Mammary epithelial cell (primary cell): ENCODE measurements at regions of chr9 and their contacts with region 1.

Region 1: DNA sequence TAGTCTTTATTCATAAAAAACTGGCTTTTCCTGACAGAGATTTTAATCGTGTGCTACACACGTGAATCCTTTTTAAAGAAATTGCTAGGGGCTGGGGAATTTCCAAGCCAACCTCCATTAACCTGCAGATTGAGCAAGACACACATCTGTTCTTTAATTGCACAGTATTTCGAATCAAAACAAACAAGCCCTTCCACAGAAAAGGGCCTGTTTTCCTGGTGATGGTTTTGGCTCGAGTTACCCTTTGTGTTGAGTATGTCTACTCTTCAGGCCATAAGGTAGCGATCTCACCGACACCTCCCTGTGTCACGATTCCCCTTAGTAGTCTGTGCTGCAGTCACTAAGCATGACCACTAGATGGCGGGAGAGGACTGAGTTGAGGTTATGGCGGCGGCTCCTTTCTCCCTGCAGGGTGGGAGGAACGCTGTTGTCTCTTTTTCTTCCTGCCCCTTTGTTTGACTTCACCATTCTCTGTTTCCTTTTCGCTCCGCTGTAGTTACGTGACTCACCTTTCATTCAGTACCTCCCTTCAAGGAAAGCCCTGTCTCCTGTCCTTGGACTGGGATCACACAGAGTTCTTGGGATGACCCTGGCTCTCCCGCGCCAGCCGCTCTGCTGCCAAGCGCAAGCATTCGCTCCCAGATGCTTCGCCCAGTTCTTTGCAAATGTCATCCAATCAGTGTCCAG is 137.1 kb upstream of the SLC24A2 start:
- DNase-seq: peak; percentile 86
- H3K4me3 ChIP-seq: peak overlapping the region; percentile 21 to 39 (median 36)
- H3K27ac ChIP-seq: no peak overlapping the region
- H3K4me1 ChIP-seq: no peaks in the 10 kb centered on the region
- H3K27me3 ChIP-seq: no peaks in the 10 kb centered on the region
- CTCF ChIP-seq: peak; percentile 96 to 98

Region 2: GRCh38 chr9:19471737-19472648 is 454.0 kb before region 1 on chr9:
- CTCF ChIA-PET with region 1: no interaction called
- dilution Hi-C with region 1: no loop called
- in situ Hi-C with region 1: no loop called
- intact Hi-C with region 1: loop called (anchors 1 kb)
- DNase-seq: peak; percentile 48
- H3K4me3 ChIP-seq: no peak overlapping the region
- H3K27ac ChIP-seq: no peak overlapping the region
- H3K4me1 ChIP-seq: no peaks in the 10 kb centered on the region
- H3K27me3 ChIP-seq: no peaks in the 10 kb centered on the region
- CTCF ChIP-seq: peak; percentile 56 to 78

Region 3: DNA sequence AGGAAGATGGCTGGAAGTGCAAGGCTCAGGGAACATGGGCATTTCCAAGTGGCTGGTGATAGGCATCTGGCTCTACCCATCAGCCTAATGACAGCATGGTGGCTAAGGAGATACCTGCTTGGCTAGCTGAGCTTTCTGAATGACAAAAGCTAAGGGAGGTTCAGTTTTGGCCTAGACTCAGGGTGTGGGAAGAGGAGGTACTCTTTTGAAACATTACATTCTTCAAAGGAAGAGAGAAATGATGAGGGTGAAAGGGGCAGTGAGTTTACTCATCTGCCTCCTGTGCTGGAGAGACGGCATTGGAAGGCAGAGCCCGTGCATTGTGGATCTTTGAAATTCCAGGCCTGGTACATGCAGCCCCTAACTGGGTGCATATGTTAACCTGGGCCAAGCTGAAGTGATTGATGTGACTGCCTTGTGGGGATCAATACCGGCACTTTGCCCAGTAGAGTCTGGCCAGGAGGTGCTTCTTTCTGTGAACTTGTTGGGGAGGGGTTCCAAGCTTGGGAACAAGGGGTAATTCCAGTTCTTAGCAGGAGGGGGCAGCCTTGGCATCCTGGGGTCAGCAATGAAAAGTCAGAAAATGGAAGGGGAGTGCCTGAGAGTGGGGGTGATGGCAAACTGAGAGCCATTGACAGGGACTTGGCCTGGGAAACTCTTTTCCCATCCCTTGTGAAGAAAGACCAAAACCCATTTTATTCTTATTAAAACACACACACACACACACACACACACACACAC is 408.6 kb before region 1 on chr9:
- CTCF ChIA-PET with region 1: interaction called, 5 read pairs
- dilution Hi-C with region 1: no loop called
- in situ Hi-C with region 1: no loop called
- intact Hi-C with region 1: loop called (anchors 1 kb)
- DNase-seq: peak; percentile 12
- H3K4me3 ChIP-seq: no peak overlapping the region
- H3K27ac ChIP-seq: no peak overlapping the region
- H3K4me1 ChIP-seq: no peaks in the 10 kb centered on the region
- H3K27me3 ChIP-seq: peaks cover 5% of the 10 kb centered on the region
- CTCF ChIP-seq: peak; percentile 46 to 67

Region 4: DNA sequence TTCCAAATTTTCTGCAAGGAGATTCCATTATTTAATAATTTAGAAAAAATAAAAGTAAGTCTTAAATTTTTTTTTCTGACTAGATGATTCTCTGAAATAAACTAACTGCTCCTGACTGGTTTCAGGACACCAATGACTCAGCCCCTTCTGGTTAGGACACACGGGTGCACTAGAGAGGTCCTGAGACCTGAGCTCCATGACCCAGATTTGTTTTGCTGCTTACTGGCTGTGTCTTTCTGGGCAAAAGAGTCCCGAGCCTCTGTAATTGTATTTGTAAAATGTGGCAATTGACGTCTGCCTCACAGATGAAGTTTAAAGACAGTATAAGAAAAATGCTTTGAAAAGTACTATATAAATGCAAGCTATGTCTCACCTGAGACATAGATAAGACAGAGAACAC is 226.2 kb before region 1 on chr9:
- CTCF ChIA-PET with region 1: no interaction called
- dilution Hi-C with region 1: no loop called
- in situ Hi-C with region 1: no loop called
- intact Hi-C with region 1: no loop called
- DNase-seq: no peak
- H3K4me3 ChIP-seq: no peak overlapping the region
- H3K27ac ChIP-seq: no peak overlapping the region
- H3K4me1 ChIP-seq: no peaks in the 10 kb centered on the region
- H3K27me3 ChIP-seq: peaks cover 3% of the 10 kb centered on the region
- CTCF ChIP-seq: no peak

Region 5: DNA sequence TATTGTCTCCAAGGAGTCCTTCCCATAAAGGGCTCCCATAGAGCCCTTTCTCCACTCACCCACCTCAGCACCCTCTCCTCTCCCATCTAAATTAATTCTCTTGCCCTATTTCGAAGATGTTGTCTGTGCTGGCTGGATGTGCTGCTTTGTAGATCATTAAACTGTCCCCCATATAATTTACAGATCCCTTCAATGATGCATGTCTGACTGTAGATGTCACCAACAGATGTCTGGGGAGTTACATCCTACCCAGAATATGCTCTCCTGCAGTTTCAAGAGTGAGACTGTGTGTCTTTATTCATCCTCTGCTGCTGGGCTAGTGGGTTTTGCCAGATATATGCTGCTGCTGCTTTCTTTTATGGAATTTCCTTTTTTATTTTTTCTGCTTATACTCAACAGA is 345.1 kb after region 1 on chr9:
- CTCF ChIA-PET with region 1: no interaction called
- dilution Hi-C with region 1: no loop called
- in situ Hi-C with region 1: no loop called
- intact Hi-C with region 1: loop called (anchors 2 kb)
- DNase-seq: no peak
- H3K4me3 ChIP-seq: no peak overlapping the region
- H3K27ac ChIP-seq: no peak overlapping the region
- H3K4me1 ChIP-seq: peaks cover 11% of the 10 kb centered on the region
- H3K27me3 ChIP-seq: no peaks in the 10 kb centered on the region
- CTCF ChIP-seq: no peak

Region 6: DNA sequence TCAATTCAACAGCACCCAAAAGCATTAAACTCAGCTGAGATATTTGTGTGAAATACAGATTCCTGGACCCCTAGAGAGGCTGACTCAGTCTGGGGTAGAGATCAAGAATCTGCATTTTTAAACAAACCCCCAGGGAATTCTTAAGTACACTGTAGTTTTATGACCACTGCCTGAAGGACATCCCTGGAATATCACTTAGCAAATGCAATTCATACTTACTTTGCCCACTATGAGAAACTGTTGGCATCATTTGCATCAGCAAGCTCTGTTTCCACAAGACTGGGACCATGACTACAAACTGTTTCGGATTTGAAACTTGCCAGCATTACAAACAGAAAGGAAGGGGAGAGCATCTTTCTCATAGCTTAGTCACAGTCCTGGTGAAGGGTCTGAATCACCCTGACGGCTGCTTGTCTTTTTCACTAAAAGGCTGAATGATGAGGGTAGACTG is 632.6 kb after region 1 on chr9:
- CTCF ChIA-PET with region 1: no interaction called
- dilution Hi-C with region 1: no loop called
- in situ Hi-C with region 1: no loop called
- intact Hi-C with region 1: loop called (anchors 10 kb)
- DNase-seq: peak; percentile 94
- H3K4me3 ChIP-seq: no peak overlapping the region
- H3K27ac ChIP-seq: no peak overlapping the region
- H3K4me1 ChIP-seq: peaks cover 10% of the 10 kb centered on the region
- H3K27me3 ChIP-seq: no peaks in the 10 kb centered on the region
- CTCF ChIP-seq: no peak

Region 7: GRCh38 chr9:21110708-21111576 is 1185.0 kb after region 1 on chr9:
- CTCF ChIA-PET with region 1: no interaction called
- dilution Hi-C with region 1: no loop called
- in situ Hi-C with region 1: no loop called
- intact Hi-C with region 1: loop called (anchors 1 kb)
- DNase-seq: peak; percentile 52
- H3K4me3 ChIP-seq: no peak overlapping the region
- H3K27ac ChIP-seq: no peak overlapping the region
- H3K4me1 ChIP-seq: no peaks in the 10 kb centered on the region
- H3K27me3 ChIP-seq: no peaks in the 10 kb centered on the region
- CTCF ChIP-seq: peak; percentile 76 to 85